ENCODE measurements at regions of chr7 and their contacts with region 1.

Region 1: DNA sequence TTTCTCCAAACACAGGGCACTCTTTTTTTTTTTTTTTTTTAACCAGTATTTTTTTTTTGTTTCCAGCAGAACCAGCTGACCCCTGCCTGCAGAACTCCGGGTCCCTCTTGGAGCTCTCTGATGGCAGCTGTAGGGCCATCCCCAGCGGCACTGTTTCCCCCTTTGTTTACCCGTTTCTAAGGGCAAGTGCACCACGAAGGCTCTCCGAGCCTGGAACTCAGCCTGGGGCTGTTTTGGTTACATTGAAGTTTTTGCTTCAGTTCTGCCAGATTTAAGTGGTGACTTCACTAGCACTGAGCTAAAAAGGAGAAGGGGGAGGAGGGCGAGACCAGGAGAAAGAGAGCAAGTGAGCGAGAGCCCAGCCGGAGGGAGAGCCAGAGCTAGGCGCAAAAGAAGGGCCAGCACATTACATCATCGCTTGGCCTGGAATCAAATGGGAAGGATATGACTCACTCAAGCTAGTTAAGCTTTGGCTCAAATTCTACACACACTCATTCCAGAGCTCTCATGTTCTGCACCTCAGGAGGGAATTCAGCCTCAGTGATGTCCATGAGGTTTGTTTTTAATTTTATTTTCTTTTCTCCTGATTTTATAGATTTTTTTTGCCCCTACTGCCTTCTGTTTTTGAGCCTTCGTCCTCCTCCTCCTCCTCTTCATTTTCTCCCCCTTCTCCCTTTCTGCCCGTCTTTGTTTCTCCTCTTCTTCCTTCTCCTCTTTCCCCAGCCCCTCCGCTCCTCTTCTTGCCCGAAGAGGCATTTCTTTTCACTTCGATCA is 272.3 kb downstream of the TRIL start:
- DNase-seq: peak; percentile 96
- H3K4me3 ChIP-seq: peak overlapping the region; percentile 47 to 99 (median 79)
- H3K27ac ChIP-seq: peak overlapping the region; percentile 98
- H3K4me1 ChIP-seq: peaks cover 25% of the 10 kb centered on the region
- H3K27me3 ChIP-seq: no peaks in the 10 kb centered on the region
- CTCF ChIP-seq: no peak

Region 2: GRCh38 chr7:28615091-28615490 is 70.7 kb before region 1 on chr7:
- CTCF ChIA-PET with region 1: interaction called, 10 read pairs
- dilution Hi-C with region 1: no loop called
- in situ Hi-C with region 1: no loop called
- intact Hi-C with region 1: no loop called
- DNase-seq: no peak
- H3K4me3 ChIP-seq: no peak overlapping the region
- H3K27ac ChIP-seq: no peak overlapping the region
- H3K4me1 ChIP-seq: peaks cover 20% of the 10 kb centered on the region
- H3K27me3 ChIP-seq: no peaks in the 10 kb centered on the region
- CTCF ChIP-seq: no peak

Region 3: GRCh38 chr7:28674359-28674782 is 11.5 kb before region 1 on chr7:
- CTCF ChIA-PET with region 1: no interaction called
- dilution Hi-C with region 1: no loop called
- in situ Hi-C with region 1: no loop called
- intact Hi-C with region 1: loop called (anchors 1 kb)
- DNase-seq: peak; percentile 86
- H3K4me3 ChIP-seq: no peak overlapping the region
- H3K27ac ChIP-seq: peak overlapping the region; percentile 80
- H3K4me1 ChIP-seq: peaks cover 22% of the 10 kb centered on the region
- H3K27me3 ChIP-seq: no peaks in the 10 kb centered on the region
- CTCF ChIP-seq: no peak

Region 4: DNA sequence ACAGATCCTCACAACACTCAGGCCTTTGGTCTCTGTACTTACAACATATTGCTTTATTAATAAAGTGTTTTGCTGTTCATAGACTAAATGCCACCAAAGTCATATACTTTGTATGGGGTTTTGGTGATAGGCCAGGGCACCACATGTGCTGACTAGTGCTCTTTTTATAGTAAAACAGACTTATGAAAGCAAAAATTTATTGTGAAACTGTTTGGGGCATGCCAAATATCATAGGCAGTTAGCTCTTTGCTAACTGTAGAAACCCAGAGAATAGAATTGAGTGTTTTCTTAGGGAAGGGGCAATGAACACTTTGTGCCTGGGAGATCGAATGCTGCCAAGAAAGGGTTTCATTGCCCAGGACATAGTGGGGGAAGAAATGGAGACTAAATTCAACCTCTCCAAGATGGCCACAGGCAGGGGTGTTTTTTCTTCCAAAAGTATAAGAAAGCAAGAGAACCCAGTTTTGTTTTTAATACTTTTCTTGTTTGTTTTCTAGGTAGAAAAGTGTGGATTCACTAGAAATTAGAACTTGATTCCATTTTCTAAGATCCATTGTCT is 129.6 kb after region 1 on chr7:
- CTCF ChIA-PET with region 1: no interaction called
- dilution Hi-C with region 1: no loop called
- in situ Hi-C with region 1: no loop called
- intact Hi-C with region 1: no loop called
- DNase-seq: no peak
- H3K4me3 ChIP-seq: no peak overlapping the region
- H3K27ac ChIP-seq: no peak overlapping the region
- H3K4me1 ChIP-seq: peaks cover 9% of the 10 kb centered on the region
- H3K27me3 ChIP-seq: no peaks in the 10 kb centered on the region
- CTCF ChIP-seq: no peak

Region 5: GRCh38 chr7:28853834-28854749 is 168.3 kb after region 1 on chr7:
- CTCF ChIA-PET with region 1: no interaction called
- dilution Hi-C with region 1: no loop called
- in situ Hi-C with region 1: no loop called
- intact Hi-C with region 1: loop called (anchors 5 kb)
- DNase-seq: peak; percentile 69
- H3K4me3 ChIP-seq: peak overlapping the region; percentile 41 to 65 (median 58)
- H3K27ac ChIP-seq: no peak overlapping the region
- H3K4me1 ChIP-seq: peaks cover 35% of the 10 kb centered on the region
- H3K27me3 ChIP-seq: no peaks in the 10 kb centered on the region
- CTCF ChIP-seq: peak; percentile 61 to 93

Measured in mammary epithelial cell (primary cell).